ENCODE measurements at regions of chr12 and their contacts with region 1.

Region 1: GRCh38 chr12:10562306-10562933 is 51.0 kb downstream of the MAGOHB start:
- DNase-seq: peak; percentile 40
- H3K4me3 ChIP-seq: no peak overlapping the region
- H3K27ac ChIP-seq: no peak overlapping the region
- H3K4me1 ChIP-seq: no peaks in the 10 kb centered on the region
- H3K27me3 ChIP-seq: no peaks in the 10 kb centered on the region
- CTCF ChIP-seq: peak; percentile 58

Region 2: DNA sequence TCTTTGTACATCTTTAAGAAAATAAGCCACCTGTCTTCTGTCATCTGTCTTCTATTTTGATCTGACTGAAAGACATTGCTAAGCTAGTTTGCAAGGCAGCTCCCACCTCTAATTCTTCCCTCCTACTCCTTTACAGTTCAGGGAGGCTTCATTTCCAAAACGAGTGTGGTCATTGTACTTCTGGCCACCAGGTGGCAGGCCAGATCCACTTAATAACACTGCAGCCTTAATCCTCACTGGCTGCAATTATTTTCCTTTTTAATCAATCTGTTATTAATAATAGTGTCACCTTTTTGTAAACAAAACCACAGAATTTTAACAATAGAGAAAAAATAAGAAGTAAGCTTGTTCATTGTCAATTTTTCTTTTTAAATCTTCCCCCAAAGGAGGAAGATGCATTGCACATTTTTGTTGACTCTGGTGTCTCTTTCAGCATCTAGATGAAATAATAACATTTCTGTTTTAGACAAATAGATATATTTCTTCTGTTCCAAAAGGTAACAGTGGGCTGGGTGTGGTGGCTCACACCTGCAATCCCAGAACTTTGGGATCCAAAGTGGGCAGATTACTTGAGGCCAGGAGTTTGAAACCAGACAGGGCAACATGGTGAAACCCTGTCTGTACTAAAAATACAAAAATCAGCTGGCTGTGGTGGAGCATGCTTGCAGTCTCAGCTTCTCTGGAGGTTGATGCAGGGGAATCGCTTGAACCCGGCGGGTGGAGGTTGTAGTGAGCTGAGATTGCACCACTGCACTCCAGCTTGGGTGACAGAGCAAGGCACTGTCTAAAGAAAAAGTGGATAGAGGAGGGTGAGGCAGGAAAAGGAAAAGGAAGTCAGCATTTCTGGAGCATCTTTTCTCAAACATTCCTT is 326.4 kb before region 1 on chr12:
- intact Hi-C with region 1: loop called (anchors 5 kb)
- DNase-seq: no peak
- H3K4me3 ChIP-seq: no peak overlapping the region
- H3K27ac ChIP-seq: no peak overlapping the region
- H3K4me1 ChIP-seq: no peaks in the 10 kb centered on the region
- H3K27me3 ChIP-seq: no peaks in the 10 kb centered on the region
- CTCF ChIP-seq: peak; percentile 86

Region 3: GRCh38 chr12:10331642-10332239 is 230.7 kb before region 1 on chr12:
- intact Hi-C with region 1: loop called (anchors 5 kb)
- DNase-seq: no peak
- H3K4me3 ChIP-seq: no peak overlapping the region
- H3K27ac ChIP-seq: no peak overlapping the region
- H3K4me1 ChIP-seq: no peaks in the 10 kb centered on the region
- H3K27me3 ChIP-seq: no peaks in the 10 kb centered on the region
- CTCF ChIP-seq: peak; percentile 38

Region 4: GRCh38 chr12:10528174-10528953 is 34.1 kb before region 1 on chr12:
- intact Hi-C with region 1: no loop called
- DNase-seq: no peak
- H3K4me3 ChIP-seq: no peak overlapping the region
- H3K27ac ChIP-seq: peak overlapping the region; percentile 66
- H3K4me1 ChIP-seq: no peaks in the 10 kb centered on the region
- H3K27me3 ChIP-seq: no peaks in the 10 kb centered on the region
- CTCF ChIP-seq: no peak

Region 5: DNA sequence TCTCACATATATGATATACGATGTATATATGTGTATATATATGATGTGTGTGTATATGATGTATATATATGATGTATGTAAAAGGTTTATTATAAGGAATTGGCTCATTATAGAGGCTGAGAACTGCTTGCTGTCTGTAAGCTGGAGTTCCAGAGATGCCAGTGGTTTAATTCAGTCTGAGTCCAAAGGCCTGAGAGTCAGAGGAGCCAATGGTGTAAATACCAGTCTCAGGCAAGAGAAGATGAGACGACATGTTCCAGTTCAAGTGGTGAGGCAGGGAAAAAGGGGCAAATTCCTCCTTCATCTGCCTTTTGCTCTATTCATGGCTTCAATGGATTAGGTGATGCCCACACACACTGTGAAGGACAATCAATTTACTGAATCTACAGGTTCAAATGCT is 128.5 kb after region 1 on chr12:
- intact Hi-C with region 1: no loop called
- DNase-seq: no peak
- H3K4me3 ChIP-seq: no peak overlapping the region
- H3K27ac ChIP-seq: no peak overlapping the region
- H3K4me1 ChIP-seq: no peaks in the 10 kb centered on the region
- H3K27me3 ChIP-seq: no peaks in the 10 kb centered on the region
- CTCF ChIP-seq: no peak

Measured in colonic mucosa (tissue), 4 donors.